ENCODE measurements at regions of chr16 and their contacts with region 1.

Region 1: DNA sequence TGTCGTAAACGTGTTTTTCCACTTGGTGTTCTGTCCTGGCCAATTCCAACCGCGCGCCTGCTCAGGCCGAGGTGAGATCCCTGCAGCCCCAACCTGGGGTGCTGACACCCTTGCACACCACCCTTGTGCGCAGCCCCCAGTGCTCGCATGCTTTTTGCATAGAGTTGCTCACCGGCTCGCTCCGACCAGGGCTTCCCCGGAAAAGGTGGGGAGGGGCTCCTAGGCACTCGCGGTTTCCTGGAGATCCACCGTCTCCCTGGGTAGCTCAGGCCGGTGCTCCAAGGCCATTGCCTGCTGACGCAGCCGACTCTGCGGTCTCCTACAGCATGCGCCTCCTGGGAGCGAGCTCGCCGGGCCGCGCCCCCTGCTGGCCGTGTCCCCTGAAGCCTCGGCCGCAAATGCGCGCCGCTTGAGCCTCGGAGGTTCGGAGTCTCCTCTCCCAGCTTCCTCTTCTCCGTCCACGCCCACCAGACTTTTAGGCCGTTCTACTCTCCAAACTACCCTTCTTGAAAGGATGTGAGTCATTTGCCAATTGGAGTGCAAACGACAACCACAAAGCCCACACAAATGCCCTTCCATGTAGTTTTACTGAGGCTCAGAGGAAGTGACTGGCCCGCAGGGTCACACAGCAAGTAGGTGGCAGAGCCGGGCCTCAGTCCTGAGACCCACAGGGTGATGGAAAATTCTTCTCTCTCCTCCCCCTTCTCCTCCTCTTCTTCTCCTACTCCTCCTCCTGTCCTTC is 7.2 kb upstream of the PDP2 start:
- DNase-seq: peak; percentile 90
- ATAC-seq: peak; percentile 91
- H3K4me3 Mint-ChIP-seq: peak overlapping the region; percentile 73
- H3K27ac Mint-ChIP-seq: peak overlapping the region; percentile 89
- H3K4me1 Mint-ChIP-seq: peaks cover 14% of the 10 kb centered on the region
- H3K27me3 Mint-ChIP-seq: peaks cover 10% of the 10 kb centered on the region
- CTCF ChIP-seq: peak; percentile 86

Region 2: DNA sequence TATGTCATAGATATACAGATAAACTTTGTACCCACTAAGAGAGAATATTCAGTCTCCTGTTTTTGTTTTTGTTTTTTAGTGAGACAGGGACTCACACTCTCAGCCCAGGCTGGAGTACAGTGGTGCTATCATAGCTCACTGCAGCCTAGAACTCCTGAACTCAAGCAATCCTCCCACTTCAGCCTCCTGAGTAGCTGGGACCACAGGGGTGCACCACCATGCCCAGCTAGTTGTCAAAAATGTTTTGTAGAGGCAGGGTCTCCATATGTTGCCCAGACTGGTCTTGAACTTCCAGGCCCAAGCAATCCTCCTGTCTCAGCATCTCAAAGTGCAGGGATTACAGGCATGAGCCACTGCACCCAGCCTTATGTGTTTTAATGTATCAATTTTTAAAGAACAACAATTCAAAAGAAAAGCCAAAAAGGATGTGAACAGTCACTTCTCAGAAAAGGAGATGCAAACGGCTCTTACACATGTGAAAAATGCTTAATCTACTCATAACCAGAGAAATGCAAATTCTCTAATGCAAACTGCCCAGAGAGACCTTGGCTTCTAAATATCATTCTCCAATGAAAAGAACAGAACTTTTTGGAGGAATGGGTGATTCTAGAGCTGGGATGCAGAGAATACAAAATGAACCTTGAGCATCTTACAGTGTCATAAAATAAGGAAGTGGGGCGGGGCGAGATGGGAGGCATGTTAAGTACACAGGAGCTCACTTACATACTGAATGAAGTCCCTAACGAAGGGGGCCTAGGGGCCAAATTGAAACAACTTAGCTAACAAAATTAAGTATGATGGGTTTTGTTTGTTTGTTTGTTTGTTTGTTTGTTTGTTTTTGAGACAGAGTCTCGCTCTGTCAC is 275.9 kb before region 1 on chr16:
- CTCF ChIA-PET with region 1: no interaction called
- POLR2A ChIA-PET with region 1: no interaction called
- DNase-seq: no peak
- ATAC-seq: no peak
- H3K4me3 Mint-ChIP-seq: no peak overlapping the region
- H3K27ac Mint-ChIP-seq: no peak overlapping the region
- H3K4me1 Mint-ChIP-seq: no peaks in the 10 kb centered on the region; the same call in 1 of the 2 replicates
- H3K27me3 Mint-ChIP-seq: peaks cover 3% of the 10 kb centered on the region; the same call in 1 of the 2 replicates
- CTCF ChIP-seq: no peak

Region 3: GRCh38 chr16:66740010-66740409 is 133.1 kb before region 1 on chr16:
- CTCF ChIA-PET with region 1: interaction called, 13 read pairs
- POLR2A ChIA-PET with region 1: no interaction called
- DNase-seq: peak; percentile 40
- ATAC-seq: peak; percentile 85
- H3K4me3 Mint-ChIP-seq: no peak overlapping the region
- H3K27ac Mint-ChIP-seq: peak overlapping the region; percentile 90
- H3K4me1 Mint-ChIP-seq: peaks cover 18% of the 10 kb centered on the region
- H3K27me3 Mint-ChIP-seq: no peaks in the 10 kb centered on the region
- CTCF ChIP-seq: peak; percentile 61

Region 4: DNA sequence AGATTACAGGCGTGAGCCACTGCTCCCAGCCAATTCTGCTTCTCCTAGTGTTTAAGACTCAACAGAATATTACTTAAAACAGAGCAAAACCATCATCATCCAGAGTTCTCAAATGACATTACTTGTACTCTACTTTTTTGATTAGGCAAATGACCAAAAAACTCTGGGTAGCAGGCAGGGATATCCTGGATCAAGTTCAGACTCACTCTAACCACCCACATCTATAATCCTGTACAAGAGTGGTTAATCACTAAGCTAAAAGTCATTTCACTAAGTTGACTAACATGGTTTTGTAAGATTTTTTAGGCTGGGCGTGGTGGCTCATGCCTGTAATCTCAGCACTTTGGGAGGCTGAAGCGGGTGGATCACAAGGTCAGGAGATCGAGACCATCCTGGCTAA is 49.1 kb before region 1 on chr16:
- CTCF ChIA-PET with region 1: interaction called, 100 read pairs
- POLR2A ChIA-PET with region 1: no interaction called
- DNase-seq: no peak
- ATAC-seq: no peak
- H3K4me3 Mint-ChIP-seq: no peak overlapping the region
- H3K27ac Mint-ChIP-seq: no peak overlapping the region
- H3K4me1 Mint-ChIP-seq: peaks cover 6% of the 10 kb centered on the region
- H3K27me3 Mint-ChIP-seq: no peaks in the 10 kb centered on the region
- CTCF ChIP-seq: no peak

Region 5: DNA sequence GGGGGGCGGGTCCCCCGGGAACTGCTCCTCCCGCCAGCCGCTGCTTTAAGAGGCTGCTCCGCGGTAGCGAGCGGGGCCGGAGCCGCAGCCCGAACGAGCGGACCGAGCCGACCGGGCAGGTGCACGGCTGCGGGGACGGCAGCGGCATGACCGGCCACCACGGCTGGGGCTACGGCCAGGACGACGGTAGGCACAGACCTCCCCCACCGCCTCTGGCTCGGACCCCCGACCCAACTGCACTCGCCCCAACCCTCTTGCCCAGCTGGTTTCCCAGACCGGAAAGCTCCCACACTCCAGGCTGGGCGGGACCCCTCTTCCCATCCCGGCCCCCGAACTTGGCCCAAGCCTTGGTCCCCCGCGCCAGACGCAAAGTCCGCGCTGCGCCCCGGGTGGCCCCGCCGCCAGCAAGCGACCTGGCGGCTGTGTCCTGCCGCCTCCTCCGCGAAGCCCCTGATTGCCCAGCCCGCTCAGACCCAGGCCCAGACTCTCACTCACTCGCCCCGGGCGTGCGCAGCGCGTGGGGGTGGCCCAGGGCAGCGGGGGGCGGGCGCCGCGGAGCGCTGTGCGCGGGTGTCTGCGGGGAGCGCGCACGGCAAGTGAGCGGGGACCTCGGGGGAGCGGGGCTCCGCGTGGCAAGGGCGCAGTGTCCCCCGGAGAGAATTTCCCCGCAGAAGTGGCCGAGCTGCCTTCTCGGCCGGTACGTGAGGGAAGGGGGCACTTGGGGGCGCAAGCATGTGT is 28.6 kb before region 1 on chr16 and contains the start of gene CA7:
- CTCF ChIA-PET with region 1: interaction called, 34 read pairs
- POLR2A ChIA-PET with region 1: no interaction called
- DNase-seq: peak; percentile 59
- ATAC-seq: no peak; the same call in 1 of the 2 replicates
- H3K4me3 Mint-ChIP-seq: peak within 1 kb of the TSS; percentile 81
- H3K27ac Mint-ChIP-seq: no peak within 1 kb of the TSS
- H3K4me1 Mint-ChIP-seq: peaks cover 13% of the 10 kb centered on the region
- H3K27me3 Mint-ChIP-seq: peaks cover 85% of the 10 kb centered on the region
- CTCF ChIP-seq: no peak
- total RNA-seq, gene CA7: 1.4 to 2.2 TPM (median 1.6 TPM) in 3 replicates

Region 6: GRCh38 chr16:66858740-66859396 is 14.2 kb before region 1 on chr16:
- CTCF ChIA-PET with region 1: interaction called, 23 read pairs
- POLR2A ChIA-PET with region 1: interaction called, 5 read pairs
- DNase-seq: no peak
- ATAC-seq: no peak
- H3K4me3 Mint-ChIP-seq: no peak overlapping the region
- H3K27ac Mint-ChIP-seq: no peak overlapping the region
- H3K4me1 Mint-ChIP-seq: no peaks in the 10 kb centered on the region
- H3K27me3 Mint-ChIP-seq: no peaks in the 10 kb centered on the region; the same call in 1 of the 2 replicates
- CTCF ChIP-seq: no peak

Region 7: DNA sequence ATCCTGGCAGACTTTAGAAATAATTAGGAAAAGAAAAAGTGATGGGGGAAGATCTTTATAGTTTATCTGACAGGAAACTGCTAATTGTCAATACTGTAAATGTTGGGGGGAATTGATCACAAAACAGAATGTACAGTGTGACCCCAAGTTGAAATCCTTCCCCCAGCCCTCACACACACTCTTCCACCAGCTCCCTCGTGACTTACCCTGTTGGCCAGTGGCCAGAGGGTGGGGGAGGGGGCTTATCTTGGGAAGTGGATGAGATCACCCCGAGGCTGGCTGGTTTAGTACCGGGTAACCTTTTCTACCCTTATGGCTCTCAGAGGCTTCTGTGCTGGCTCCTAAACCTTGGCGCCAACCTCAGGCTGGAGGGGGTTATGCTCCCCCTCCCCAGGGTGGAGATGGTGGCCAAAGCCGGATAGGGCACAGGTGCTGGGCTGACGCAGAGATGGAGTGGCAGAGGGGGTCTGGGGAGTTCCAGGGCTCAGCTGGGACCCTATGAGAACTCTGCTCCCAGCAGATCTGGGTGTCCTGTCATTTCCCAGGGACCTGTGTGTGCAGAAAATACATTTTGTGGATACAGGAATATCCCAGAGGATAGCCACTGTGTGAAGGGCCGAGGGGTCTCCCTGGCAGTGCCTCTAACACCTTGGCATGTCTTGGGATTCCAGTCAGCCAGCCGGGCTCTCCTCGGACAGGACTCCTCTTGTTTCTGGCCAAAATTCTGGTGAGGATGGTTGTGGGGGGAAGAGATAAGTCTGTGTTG is 27.0 kb after region 1 on chr16:
- CTCF ChIA-PET with region 1: interaction called, 11 read pairs
- POLR2A ChIA-PET with region 1: no interaction called
- DNase-seq: no peak
- ATAC-seq: peak; percentile 41
- H3K4me3 Mint-ChIP-seq: no peak overlapping the region
- H3K27ac Mint-ChIP-seq: no peak overlapping the region
- H3K4me1 Mint-ChIP-seq: peaks cover 8% of the 10 kb centered on the region
- H3K27me3 Mint-ChIP-seq: no peaks in the 10 kb centered on the region; the same call in 1 of the 2 replicates
- CTCF ChIP-seq: no peak

Region 8: DNA sequence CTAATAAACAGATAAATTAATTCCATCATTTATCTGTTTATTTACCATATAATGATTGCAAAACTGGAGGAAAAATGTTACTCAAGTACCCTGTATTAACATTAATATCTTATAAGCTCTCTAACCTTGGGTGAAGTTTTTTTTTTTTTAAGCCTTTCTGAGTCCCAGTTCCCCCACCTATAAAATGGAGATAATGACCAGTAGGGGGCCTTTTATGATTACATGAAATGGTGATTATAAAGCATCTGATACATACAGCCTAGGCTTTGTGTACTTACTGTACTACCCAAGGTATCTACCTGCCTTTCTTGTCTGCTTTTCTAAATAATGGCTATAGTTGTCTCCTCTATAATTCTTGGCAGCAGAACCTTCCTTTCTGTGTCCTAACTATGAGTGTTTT is 476.1 kb after region 1 on chr16:
- CTCF ChIA-PET with region 1: no interaction called
- POLR2A ChIA-PET with region 1: no interaction called
- DNase-seq: no peak
- ATAC-seq: no peak
- H3K4me3 Mint-ChIP-seq: no peak overlapping the region
- H3K27ac Mint-ChIP-seq: no peak overlapping the region
- H3K4me1 Mint-ChIP-seq: no peaks in the 10 kb centered on the region
- H3K27me3 Mint-ChIP-seq: peaks cover 7% of the 10 kb centered on the region
- CTCF ChIP-seq: no peak